CD8-positive, alpha-beta T cell (primary cell): ENCODE measurements at regions of chr20 and their contacts with region 1.

Region 1: GRCh38 chr20:18507218-18508021 is at the start of gene SEC23B:
- DNase-seq: peak; percentile 96 to 100 (median 98)
- ATAC-seq: peak; percentile 82
- H3K4me3 ChIP-seq: peak within 1 kb of the TSS; percentile 63 to 87
- H3K4me3 Mint-ChIP-seq: peak within 1 kb of the TSS; percentile 100
- H3K27ac ChIP-seq: peak within 1 kb of the TSS; percentile 97 to 100
- H3K27ac Mint-ChIP-seq: peak within 1 kb of the TSS; percentile 100
- H3K4me1 ChIP-seq: peaks cover 17% of the 10 kb centered on the region
- H3K4me1 Mint-ChIP-seq: peaks cover 47% of the 10 kb centered on the region
- H3K27me3 ChIP-seq: no peaks in the 10 kb centered on the region
- H3K27me3 Mint-ChIP-seq: no peaks in the 10 kb centered on the region
- CTCF ChIP-seq: no peak
- total RNA-seq, gene SEC23B: 31.5 to 31.8 TPM

Region 2: GRCh38 chr20:17569616-17570346 is 937.6 kb before region 1 on chr20 and contains the start of gene DSTN:
- CTCF ChIA-PET with region 1: no interaction called
- POLR2A ChIA-PET with region 1: no interaction called
- intact Hi-C with region 1: loop called in 1 of 2 experiments (anchors 5 kb)
- DNase-seq: peak; percentile 76 to 94 (median 86)
- ATAC-seq: peak; percentile 88
- H3K4me3 ChIP-seq: peak within 1 kb of the TSS; percentile 80 to 92
- H3K4me3 Mint-ChIP-seq: peak within 1 kb of the TSS; percentile 85
- H3K27ac ChIP-seq: peak within 1 kb of the TSS; percentile 73 to 81
- H3K27ac Mint-ChIP-seq: peak within 1 kb of the TSS; percentile 91
- H3K4me1 ChIP-seq: peaks cover 24% of the 10 kb centered on the region
- H3K4me1 Mint-ChIP-seq: peaks cover 28% of the 10 kb centered on the region
- H3K27me3 ChIP-seq: no peaks in the 10 kb centered on the region
- H3K27me3 Mint-ChIP-seq: no peaks in the 10 kb centered on the region
- CTCF ChIP-seq: no peak
- total RNA-seq, gene DSTN: 40.5 to 42.9 TPM

Region 3: GRCh38 chr20:18466894-18467730 is 40.3 kb before region 1 on chr20 and contains the starts of genes DZANK1 and POLR3F:
- CTCF ChIA-PET with region 1: interaction called, 7 read pairs
- POLR2A ChIA-PET with region 1: interaction called, 62 read pairs
- intact Hi-C with region 1: loop called (anchors 1 kb)
- DNase-seq: peak; percentile 84 to 95 (median 93)
- ATAC-seq: peak; percentile 90
- H3K4me3 ChIP-seq: peak within 1 kb of the TSS; percentile 79 to 93
- H3K4me3 Mint-ChIP-seq: peak within 1 kb of the TSS; percentile 97
- H3K27ac ChIP-seq: peak within 1 kb of the TSS; percentile 73 to 92
- H3K27ac Mint-ChIP-seq: peak within 1 kb of the TSS; percentile 97
- H3K4me1 ChIP-seq: peaks cover 16% of the 10 kb centered on the region
- H3K4me1 Mint-ChIP-seq: peaks cover 24% of the 10 kb centered on the region
- H3K27me3 ChIP-seq: no peaks in the 10 kb centered on the region
- H3K27me3 Mint-ChIP-seq: no peaks in the 10 kb centered on the region
- CTCF ChIP-seq: no peak
- total RNA-seq, gene DZANK1: 2.0 to 2.3 TPM
- total RNA-seq, gene POLR3F: 11.5 TPM

Region 4: DNA sequence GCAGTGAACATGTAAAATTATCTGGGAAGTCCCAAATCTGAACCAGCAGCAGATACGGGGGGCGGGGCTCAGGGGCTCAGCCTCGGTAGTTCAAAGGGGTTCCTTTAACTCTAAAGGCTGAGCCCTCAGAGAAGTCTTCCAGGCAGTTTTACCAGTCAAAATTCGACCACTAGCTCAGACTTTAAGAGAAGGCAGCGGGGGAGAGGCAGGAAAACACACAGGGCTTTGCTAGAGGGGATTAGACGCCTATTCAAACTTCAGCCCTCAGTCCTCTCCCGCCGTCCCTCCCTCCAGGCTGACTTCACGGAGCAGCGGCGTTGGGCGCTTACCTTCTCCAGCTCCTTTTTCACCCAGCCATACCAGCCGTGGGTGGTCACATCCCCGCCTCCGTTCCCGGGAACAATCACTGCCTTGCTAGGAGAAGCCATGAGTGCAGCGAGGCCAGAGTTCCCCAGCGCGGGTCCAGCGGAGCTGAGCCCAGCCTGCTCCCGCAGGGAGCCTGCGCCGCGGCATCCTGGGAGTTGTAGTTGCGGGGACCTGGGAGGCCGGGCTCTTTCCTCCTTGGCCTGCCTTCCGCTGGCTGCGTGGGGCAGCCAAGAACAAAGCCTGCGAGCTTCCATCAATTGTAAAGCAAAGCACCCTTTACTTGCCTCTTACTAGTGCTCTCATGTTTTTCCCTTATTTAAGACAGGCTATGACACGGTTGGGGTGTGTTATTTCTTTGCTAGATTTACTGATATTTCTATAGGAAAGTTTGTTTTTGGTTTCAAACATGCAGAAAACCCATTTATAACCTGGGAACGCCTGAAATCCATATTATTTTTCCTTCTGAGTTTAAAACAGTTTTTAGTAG is 10.5 kb before region 1 on chr20 and contains the start of gene RBBP9:
- CTCF ChIA-PET with region 1: interaction called, 4 read pairs
- POLR2A ChIA-PET with region 1: interaction called, 74 read pairs
- intact Hi-C with region 1: loop called (anchors 1 kb)
- DNase-seq: peak; percentile 31 to 86 (median 75)
- ATAC-seq: peak; percentile 98
- H3K4me3 ChIP-seq: peak within 1 kb of the TSS; percentile 77 to 93
- H3K4me3 Mint-ChIP-seq: peak within 1 kb of the TSS; percentile 96
- H3K27ac ChIP-seq: peak within 1 kb of the TSS; percentile 50 to 62
- H3K27ac Mint-ChIP-seq: peak within 1 kb of the TSS; percentile 90
- H3K4me1 ChIP-seq: peaks cover 16% of the 10 kb centered on the region
- H3K4me1 Mint-ChIP-seq: peaks cover 20% of the 10 kb centered on the region
- H3K27me3 ChIP-seq: no peaks in the 10 kb centered on the region
- H3K27me3 Mint-ChIP-seq: no peaks in the 10 kb centered on the region
- CTCF ChIP-seq: no peak
- total RNA-seq, gene RBBP9: 2.1 to 2.3 TPM

Region 5: DNA sequence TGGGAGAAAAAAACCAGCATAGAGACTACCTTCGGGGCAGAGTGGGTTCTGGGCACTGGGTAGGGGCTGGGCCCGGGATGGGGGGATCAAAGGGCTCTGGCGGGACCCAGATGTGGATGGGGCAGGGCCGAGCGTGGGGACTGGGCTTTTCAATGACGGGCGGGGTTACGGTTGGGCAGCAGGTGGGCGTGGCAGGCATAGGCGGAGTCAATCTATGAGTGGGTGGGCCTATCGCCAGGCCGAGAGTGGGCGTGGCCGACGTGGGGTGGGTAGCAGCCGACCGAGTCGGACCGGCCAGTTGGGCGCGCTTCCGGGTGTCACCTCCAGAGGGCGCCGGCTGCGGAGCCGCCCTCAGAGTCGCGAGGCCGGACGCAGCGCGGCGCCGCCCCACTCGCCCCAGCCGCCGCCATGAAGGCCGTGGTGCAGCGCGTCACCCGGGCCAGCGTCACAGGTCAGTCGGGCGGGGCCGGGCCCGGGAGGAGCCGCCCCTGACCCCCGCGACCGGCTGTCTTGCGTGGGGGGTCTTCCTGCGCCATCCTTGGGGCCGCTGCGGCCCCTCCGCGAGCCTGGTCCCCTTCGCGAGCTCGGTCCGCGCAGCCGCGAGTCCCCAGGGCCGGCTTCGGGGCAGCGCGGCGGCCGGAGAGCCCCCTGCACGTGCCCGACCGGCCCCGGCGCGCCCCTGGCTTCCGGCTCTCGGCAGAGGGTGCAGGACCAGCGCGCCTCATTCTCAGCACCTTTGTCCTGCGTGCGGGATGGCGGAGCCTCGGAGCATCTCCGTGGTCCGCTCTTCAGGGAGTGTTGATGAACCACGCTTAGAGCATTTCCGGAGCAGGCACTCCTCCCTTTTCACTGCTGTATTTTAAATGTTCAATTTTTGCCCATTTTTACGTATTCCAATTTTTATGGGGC is 80.5 kb after region 1 on chr20 and contains the start of gene DTD1:
- CTCF ChIA-PET with region 1: no interaction called
- POLR2A ChIA-PET with region 1: no interaction called
- intact Hi-C with region 1: loop called (anchors 5 kb)
- DNase-seq: peak; percentile 53 to 89 (median 82)
- ATAC-seq: peak; percentile 82
- H3K4me3 ChIP-seq: peak within 1 kb of the TSS; percentile 65 to 83
- H3K4me3 Mint-ChIP-seq: peak within 1 kb of the TSS; percentile 95
- H3K27ac ChIP-seq: peak within 1 kb of the TSS; percentile 56 to 83
- H3K27ac Mint-ChIP-seq: peak within 1 kb of the TSS; percentile 94
- H3K4me1 ChIP-seq: peaks cover 18% of the 10 kb centered on the region
- H3K4me1 Mint-ChIP-seq: peaks cover 32% of the 10 kb centered on the region
- H3K27me3 ChIP-seq: no peaks in the 10 kb centered on the region
- H3K27me3 Mint-ChIP-seq: peaks cover 6% of the 10 kb centered on the region
- CTCF ChIP-seq: peak; percentile 45
- total RNA-seq, gene DTD1: 12.5 to 14.5 TPM